HepG2 (cell line): ENCODE measurements at regions of chr2 and their contacts with region 1.

Region 1: GRCh38 chr2:107412209-107412904 is 414.3 kb upstream of the RGPD4 start:
- DNase-seq: no peak
- ATAC-seq: no peak
- H3K4me3 ChIP-seq: no peak overlapping the region
- H3K27ac ChIP-seq: no peak overlapping the region
- H3K4me1 ChIP-seq: no peaks in the 10 kb centered on the region
- H3K27me3 ChIP-seq: no peaks in the 10 kb centered on the region
- CTCF ChIP-seq: no peak
- EP300 ChIP-seq: no peak
- POLR2A ChIP-seq: no peak
- RAD21 ChIP-seq: no peak

Region 2: GRCh38 chr2:107313316-107313715 is 99.0 kb before region 1 on chr2:
- CTCF ChIA-PET with region 1: no interaction called
- POLR2A ChIA-PET with region 1: no interaction called
- in situ Hi-C with region 1: no loop called
- intact Hi-C with region 1: no loop called
- DNase-seq: no peak
- ATAC-seq: no peak
- H3K4me3 ChIP-seq: no peak overlapping the region
- H3K27ac ChIP-seq: no peak overlapping the region
- H3K4me1 ChIP-seq: no peaks in the 10 kb centered on the region
- H3K27me3 ChIP-seq: no peaks in the 10 kb centered on the region
- CTCF ChIP-seq: no peak
- EP300 ChIP-seq: no peak
- POLR2A ChIP-seq: no peak
- RAD21 ChIP-seq: no peak

Region 3: GRCh38 chr2:107358362-107358761 is 54.0 kb before region 1 on chr2:
- CTCF ChIA-PET with region 1: no interaction called
- POLR2A ChIA-PET with region 1: no interaction called
- in situ Hi-C with region 1: no loop called
- intact Hi-C with region 1: no loop called
- DNase-seq: no peak
- ATAC-seq: no peak
- H3K4me3 ChIP-seq: no peak overlapping the region
- H3K27ac ChIP-seq: no peak overlapping the region
- H3K4me1 ChIP-seq: no peaks in the 10 kb centered on the region
- H3K27me3 ChIP-seq: no peaks in the 10 kb centered on the region
- CTCF ChIP-seq: no peak
- EP300 ChIP-seq: no peak
- POLR2A ChIP-seq: no peak
- RAD21 ChIP-seq: no peak

Region 4: DNA sequence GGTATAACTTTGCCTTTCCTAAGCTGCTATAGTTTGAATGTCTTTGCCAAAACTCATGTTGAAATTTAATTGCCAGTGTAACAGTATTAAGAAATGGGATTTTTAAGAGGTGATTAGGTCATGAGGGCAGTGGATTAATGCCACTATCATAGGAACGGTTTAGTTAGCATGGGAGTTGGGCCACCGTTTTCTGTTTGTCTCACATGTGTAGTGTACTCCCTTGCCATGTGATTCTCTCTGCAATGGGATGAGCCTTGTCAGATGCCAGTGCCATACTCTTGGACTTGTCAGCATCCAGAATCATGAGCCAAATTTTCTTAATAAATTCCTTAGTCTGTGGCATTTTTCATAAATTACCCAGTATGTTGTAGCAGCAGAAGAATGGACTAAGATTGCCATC is 25.4 kb after region 1 on chr2:
- CTCF ChIA-PET with region 1: no interaction called
- POLR2A ChIA-PET with region 1: no interaction called
- in situ Hi-C with region 1: no loop called
- intact Hi-C with region 1: loop called (anchors 2 kb)
- DNase-seq: no peak
- ATAC-seq: no peak
- H3K4me3 ChIP-seq: no peak overlapping the region
- H3K27ac ChIP-seq: no peak overlapping the region
- H3K4me1 ChIP-seq: no peaks in the 10 kb centered on the region
- H3K27me3 ChIP-seq: no peaks in the 10 kb centered on the region
- CTCF ChIP-seq: no peak
- EP300 ChIP-seq: no peak
- POLR2A ChIP-seq: no peak
- RAD21 ChIP-seq: no peak

Region 5: DNA sequence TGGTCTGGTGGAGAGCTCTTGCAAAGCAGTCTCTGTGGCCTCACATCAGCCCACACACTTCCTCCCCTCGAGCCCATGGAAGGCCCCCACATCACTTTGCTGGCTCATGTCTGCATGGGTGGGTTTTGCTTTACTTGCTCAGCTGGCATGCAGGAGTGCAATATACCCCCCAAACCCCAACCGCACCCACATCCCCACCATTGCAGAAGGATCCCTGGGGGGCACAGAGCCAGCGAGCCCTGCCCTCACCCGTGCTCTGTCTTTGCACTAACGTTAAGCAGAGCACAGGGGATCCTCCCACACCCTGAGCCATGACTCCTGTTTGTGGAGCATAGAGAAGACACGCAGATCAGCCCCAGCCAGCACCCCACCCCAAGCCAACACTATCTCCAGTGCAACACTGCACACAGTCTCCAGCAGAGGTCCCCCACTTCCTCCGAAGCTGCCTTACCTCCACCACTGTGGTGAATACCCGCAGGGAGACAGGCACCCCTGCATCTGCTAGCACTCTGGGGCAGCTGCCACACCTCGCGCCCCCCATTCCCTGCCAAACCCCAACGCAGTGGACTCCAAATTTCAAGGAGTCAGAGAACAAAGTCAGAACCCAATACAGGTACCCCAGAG is 236.5 kb after region 1 on chr2:
- CTCF ChIA-PET with region 1: no interaction called
- POLR2A ChIA-PET with region 1: no interaction called
- in situ Hi-C with region 1: no loop called
- intact Hi-C with region 1: no loop called
- DNase-seq: no peak
- ATAC-seq: peak; percentile 77
- H3K4me3 ChIP-seq: no peak overlapping the region
- H3K27ac ChIP-seq: no peak overlapping the region
- H3K4me1 ChIP-seq: no peaks in the 10 kb centered on the region
- H3K27me3 ChIP-seq: no peaks in the 10 kb centered on the region
- CTCF ChIP-seq: peak; percentile 34; the same call in 1 of the 2 replicates
- EP300 ChIP-seq: no peak
- POLR2A ChIP-seq: no peak
- RAD21 ChIP-seq: no peak